Activated CD4-positive, alpha-beta T cell treated with anti-CD3 and anti-CD28 coated beads, Interleukin-2, amount 10 ng/mL, durations not matched to agents 24 days and 14 days (primary cell): ENCODE measurements at regions of chr5 and their contacts with region 1.

Region 1: GRCh38 chr5:95718203-95718602 is 12.9 kb upstream of the RHOBTB3 start:
- DNase-seq: peak; percentile 78
- H3K4me3 Mint-ChIP-seq: no peak overlapping the region
- H3K27ac Mint-ChIP-seq: no peak overlapping the region
- H3K4me1 Mint-ChIP-seq: peaks cover 22% of the 10 kb centered on the region
- H3K27me3 Mint-ChIP-seq: peaks cover 29% of the 10 kb centered on the region

Region 2: GRCh38 chr5:95664204-95664786 is 53.9 kb before region 1 on chr5:
- intact Hi-C with region 1: loop called (anchors 2 kb)
- DNase-seq: peak; percentile 78
- H3K4me3 Mint-ChIP-seq: no peak overlapping the region
- H3K27ac Mint-ChIP-seq: no peak overlapping the region
- H3K4me1 Mint-ChIP-seq: peaks cover 2% of the 10 kb centered on the region
- H3K27me3 Mint-ChIP-seq: peaks cover 13% of the 10 kb centered on the region

Region 3: GRCh38 chr5:95746722-95747679 is 28.8 kb after region 1 on chr5:
- intact Hi-C with region 1: loop called (anchors 2 kb)
- DNase-seq: no peak
- H3K4me3 Mint-ChIP-seq: no peak overlapping the region
- H3K27ac Mint-ChIP-seq: no peak overlapping the region
- H3K4me1 Mint-ChIP-seq: peaks cover 9% of the 10 kb centered on the region
- H3K27me3 Mint-ChIP-seq: peaks cover 27% of the 10 kb centered on the region

Region 4: DNA sequence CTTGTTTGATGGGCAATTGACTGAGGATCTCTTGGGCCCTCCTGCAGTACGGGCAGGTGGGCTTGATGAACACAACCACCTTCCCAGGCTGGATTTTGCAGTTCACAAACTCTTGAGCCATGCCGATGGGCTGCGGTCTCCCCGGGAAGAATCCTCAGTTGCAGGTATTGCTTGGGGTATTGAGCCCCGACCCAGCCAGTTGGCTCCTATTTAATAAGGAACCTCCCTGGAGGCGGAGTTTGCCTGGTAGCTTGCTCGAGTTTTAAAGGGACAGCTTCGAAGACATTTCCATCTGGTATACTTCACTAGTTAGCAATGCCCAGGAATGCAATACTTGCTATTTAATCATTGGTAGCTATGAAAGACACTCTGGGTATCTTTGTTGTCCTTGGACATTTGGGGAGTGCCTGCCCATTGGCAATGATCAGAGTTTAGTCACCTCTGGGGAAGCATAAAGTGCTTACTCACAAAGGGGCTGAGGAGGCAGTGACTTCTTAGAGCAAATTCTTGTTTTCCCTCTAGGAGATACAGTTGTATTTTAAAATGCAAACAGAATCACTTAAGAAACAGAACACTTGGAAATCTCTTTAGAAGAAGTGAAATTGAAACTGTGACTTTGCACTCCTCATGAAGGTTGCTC is 104.5 kb after region 1 on chr5 and contains the start of gene GLRX:
- intact Hi-C with region 1: loop called (anchors 5 kb)
- DNase-seq: peak; percentile 91
- H3K4me3 Mint-ChIP-seq: peak within 1 kb of the TSS; percentile 91
- H3K27ac Mint-ChIP-seq: peak within 1 kb of the TSS; percentile 86
- H3K4me1 Mint-ChIP-seq: peaks cover 64% of the 10 kb centered on the region
- H3K27me3 Mint-ChIP-seq: no peaks in the 10 kb centered on the region
- total RNA-seq, gene GLRX: 13.5 and 17.3 TPM in 2 replicates

Region 5: GRCh38 chr5:95883613-95884325 is 165.6 kb after region 1 on chr5:
- intact Hi-C with region 1: no loop called
- DNase-seq: peak; percentile 46
- H3K4me3 Mint-ChIP-seq: no peak overlapping the region
- H3K27ac Mint-ChIP-seq: no peak overlapping the region
- H3K4me1 Mint-ChIP-seq: peaks cover 11% of the 10 kb centered on the region
- H3K27me3 Mint-ChIP-seq: no peaks in the 10 kb centered on the region

Region 6: DNA sequence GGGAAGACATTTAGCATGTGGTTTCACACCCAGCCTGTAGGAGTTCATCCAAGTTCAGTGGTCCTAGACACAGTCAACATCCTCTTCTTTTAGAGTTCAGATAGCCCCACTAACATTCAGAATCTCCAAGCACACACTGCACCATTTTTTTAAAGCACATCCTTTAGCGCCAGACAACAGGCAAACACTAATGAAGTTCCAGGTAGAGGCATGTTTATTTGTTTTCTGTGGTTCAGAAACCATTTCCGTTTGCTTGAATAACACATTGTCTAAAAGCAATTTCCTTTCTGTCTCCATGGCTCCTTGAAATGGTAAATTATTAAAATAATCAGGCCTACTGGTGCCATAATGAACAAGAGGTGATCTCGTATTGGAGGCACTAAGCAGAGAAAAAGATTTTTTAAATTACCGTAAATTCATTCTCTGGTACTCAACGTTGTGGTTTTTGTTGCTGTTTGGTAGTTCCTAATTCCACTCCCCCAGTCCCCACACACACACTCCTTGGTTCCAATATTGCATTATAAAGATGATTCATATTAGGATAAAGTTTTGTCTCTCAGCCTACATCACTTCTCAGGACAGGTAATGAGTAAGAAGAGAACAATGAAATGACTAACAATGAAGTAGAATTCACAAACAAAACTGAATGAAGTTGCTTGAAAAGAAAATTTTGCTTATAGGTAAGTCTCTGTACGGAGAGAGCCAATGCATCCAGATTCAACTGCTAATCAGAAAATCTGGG is 561.8 kb after region 1 on chr5:
- intact Hi-C with region 1: loop called (anchors 5 kb)
- DNase-seq: no peak
- H3K4me3 Mint-ChIP-seq: peak overlapping the region; percentile 53
- H3K27ac Mint-ChIP-seq: peak overlapping the region; percentile 77
- H3K4me1 Mint-ChIP-seq: peaks cover 22% of the 10 kb centered on the region
- H3K27me3 Mint-ChIP-seq: peaks cover 6% of the 10 kb centered on the region

Region 7: DNA sequence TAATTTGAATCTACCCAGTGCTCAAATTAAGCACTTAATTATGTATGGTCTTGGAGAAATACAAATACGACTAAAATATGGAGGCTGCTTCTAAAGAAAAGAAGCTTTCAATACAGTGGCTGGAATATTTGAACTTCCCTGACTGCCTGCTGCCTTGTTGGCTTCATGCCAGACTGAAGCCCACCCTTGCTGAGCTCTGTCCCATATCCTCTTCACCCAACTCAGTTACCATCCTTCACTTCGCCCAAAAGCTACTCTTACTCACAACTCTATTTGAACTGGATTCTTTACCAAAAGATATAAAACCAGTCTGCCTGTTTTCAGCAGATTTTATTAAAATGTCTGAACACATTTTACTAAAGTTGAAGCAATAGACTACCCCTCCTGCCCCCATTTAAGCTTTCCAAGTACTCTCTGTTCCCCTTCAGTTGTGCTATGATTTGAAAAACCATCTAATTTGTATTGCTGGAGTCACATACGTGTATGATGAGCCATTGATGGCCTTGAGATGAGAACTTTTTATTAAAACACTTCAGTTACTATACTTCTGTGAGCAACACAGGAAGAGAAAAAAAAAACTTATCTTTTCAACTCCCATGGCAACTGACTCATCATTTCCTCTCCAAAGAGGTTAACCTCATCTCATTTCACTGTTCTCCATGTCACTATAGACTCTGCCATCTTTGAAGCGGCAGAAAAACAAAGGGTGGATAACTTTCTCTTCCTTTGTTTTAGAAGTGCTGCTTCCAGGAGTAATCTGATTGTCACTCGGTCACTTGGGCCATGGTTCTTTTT is 819.0 kb after region 1 on chr5:
- intact Hi-C with region 1: loop called (anchors 10 kb)
- DNase-seq: peak; percentile 83
- H3K4me3 Mint-ChIP-seq: peak overlapping the region; percentile 56
- H3K27ac Mint-ChIP-seq: peak overlapping the region; percentile 85
- H3K4me1 Mint-ChIP-seq: peaks cover 27% of the 10 kb centered on the region
- H3K27me3 Mint-ChIP-seq: peaks cover 7% of the 10 kb centered on the region